Spleen (tissue), 13 donors: ENCODE measurements at regions of chr4 and their contacts with region 1.

Region 1: GRCh38 chr4:105520817-105521790 is 31.3 kb upstream of the ARHGEF38 start:
- DNase-seq: no peak
- H3K4me3 ChIP-seq: no peak overlapping the region
- H3K27ac ChIP-seq: no peak overlapping the region
- H3K4me1 ChIP-seq: no peaks in the 10 kb centered on the region
- H3K27me3 ChIP-seq: peaks cover 0 to 10% (median 0%) of the 10 kb centered on the region in 7 donors
- CTCF ChIP-seq: peak in 8 of 11 experiments; percentile 14 to 60 (median 54)
- POLR2A ChIP-seq: no peak

Region 2: DNA sequence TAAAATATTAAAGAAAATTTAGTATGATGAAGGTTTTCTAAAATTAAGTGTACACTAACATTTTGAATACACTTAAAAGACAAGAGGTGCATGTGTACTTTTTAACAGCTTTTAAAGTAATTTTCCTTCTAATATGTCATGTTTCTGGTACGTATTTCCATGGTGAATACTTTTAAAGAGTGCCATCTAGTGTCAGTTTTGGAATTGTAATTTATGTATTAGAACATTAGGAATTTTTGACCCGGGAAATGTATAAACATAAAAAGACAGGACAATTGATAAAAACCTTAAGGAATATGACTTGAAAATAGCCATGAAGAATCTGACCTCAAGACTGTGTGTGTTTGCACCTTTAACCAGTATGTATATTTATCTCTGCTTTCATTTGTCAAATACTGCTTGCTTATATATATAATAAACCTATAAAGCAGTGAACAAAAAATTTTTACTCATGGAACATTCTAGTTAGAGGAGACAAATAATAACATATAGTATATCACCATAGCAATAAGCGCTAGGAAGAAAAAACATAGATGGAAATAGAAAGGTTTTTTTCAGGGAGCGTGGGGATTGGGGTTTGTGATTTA is 194.7 kb after region 1 on chr4:
- intact Hi-C with region 1: loop called (anchors 5 kb)
- DNase-seq: no peak
- H3K4me3 ChIP-seq: no peak overlapping the region
- H3K27ac ChIP-seq: no peak overlapping the region
- H3K4me1 ChIP-seq: peaks cover 0 to 27% (median 21%) of the 10 kb centered on the region in 6 donors
- H3K27me3 ChIP-seq: no peaks in the 10 kb centered on the region
- CTCF ChIP-seq: peak in 8 of 11 experiments; percentile 8 to 56 (median 49)
- POLR2A ChIP-seq: no peak